ENCODE measurements at regions of chr16 and their contacts with region 1.

Region 1: GRCh38 chr16:67841764-67842508 is at the start of gene THAP11:
- DNase-seq: peak; percentile 96
- ATAC-seq: peak; percentile 68
- H3K4me3 Mint-ChIP-seq: peak within 1 kb of the TSS; percentile 97
- H3K27ac Mint-ChIP-seq: peak within 1 kb of the TSS; percentile 96
- H3K4me1 Mint-ChIP-seq: peaks cover 28% of the 10 kb centered on the region
- H3K27me3 Mint-ChIP-seq: no peaks in the 10 kb centered on the region
- CTCF ChIP-seq: peak; percentile 84
- total RNA-seq, gene THAP11: 40.6 to 40.7 TPM

Region 2: DNA sequence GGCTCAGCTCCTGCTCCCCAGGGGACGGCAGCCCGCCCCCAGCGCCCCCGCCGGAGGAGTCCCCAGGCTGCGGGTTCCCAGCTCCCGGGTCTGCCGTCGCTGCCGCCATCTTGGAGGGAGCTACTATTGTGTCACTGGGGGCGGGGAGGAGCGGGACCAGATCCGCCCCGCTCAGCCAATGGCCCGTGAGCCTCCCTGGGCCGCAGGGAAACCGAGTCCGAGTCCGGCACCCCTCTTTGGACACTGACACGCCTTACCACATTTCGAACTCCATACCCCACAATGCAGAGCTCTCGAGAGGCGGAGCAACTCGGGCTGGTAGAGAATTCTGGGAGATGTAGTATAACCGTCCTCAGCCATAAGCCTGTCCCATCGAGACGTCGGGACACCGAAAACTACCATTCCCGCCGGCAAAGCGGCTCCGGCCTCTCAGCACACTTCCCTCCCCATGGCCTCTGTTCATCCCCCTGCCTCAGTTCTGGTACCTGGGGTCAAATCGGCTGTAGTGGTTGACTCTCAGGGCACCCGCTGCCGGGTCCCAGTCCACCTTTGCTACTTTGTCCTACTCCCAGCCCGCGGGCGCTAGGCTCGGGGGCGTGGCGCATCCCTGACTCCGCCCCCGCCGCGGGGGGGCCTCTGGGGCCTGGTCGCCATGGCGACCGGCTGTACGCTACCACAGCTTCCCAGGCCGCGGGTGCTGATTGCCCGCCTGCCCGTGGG is 35.3 kb before region 1 on chr16 and contains the starts of genes RANBP10 and TSNAXIP1:
- CTCF ChIA-PET with region 1: interaction called, 5 read pairs
- POLR2A ChIA-PET with region 1: interaction called, 5 read pairs
- intact Hi-C with region 1: loop called (anchors 5 kb)
- DNase-seq: peak; percentile 98
- ATAC-seq: peak; percentile 96
- H3K4me3 Mint-ChIP-seq: peak within 1 kb of the TSS; percentile 94
- H3K27ac Mint-ChIP-seq: peak within 1 kb of the TSS; percentile 97
- H3K4me1 Mint-ChIP-seq: peaks cover 38% of the 10 kb centered on the region
- H3K27me3 Mint-ChIP-seq: no peaks in the 10 kb centered on the region
- CTCF ChIP-seq: no peak
- total RNA-seq, gene RANBP10: 15.9 to 18.9 TPM
- total RNA-seq, gene TSNAXIP1: 0.40 to 0.47 TPM

Region 3: GRCh38 chr16:67865316-67865715 is 23.4 kb after region 1 on chr16:
- CTCF ChIA-PET with region 1: no interaction called
- POLR2A ChIA-PET with region 1: interaction called, 11 read pairs
- intact Hi-C with region 1: no loop called
- DNase-seq: peak; percentile 30
- ATAC-seq: peak; percentile 64
- H3K4me3 Mint-ChIP-seq: no peak overlapping the region
- H3K27ac Mint-ChIP-seq: no peak overlapping the region
- H3K4me1 Mint-ChIP-seq: no peaks in the 10 kb centered on the region
- H3K27me3 Mint-ChIP-seq: no peaks in the 10 kb centered on the region
- CTCF ChIP-seq: peak; percentile 33

Region 4: GRCh38 chr16:67872786-67873537 is 31.0 kb after region 1 on chr16 and contains the start of gene EDC4:
- CTCF ChIA-PET with region 1: no interaction called
- POLR2A ChIA-PET with region 1: interaction called, 12 read pairs
- intact Hi-C with region 1: no loop called
- DNase-seq: peak; percentile 89
- ATAC-seq: peak; percentile 90
- H3K4me3 Mint-ChIP-seq: peak within 1 kb of the TSS; percentile 82
- H3K27ac Mint-ChIP-seq: peak within 1 kb of the TSS; percentile 93
- H3K4me1 Mint-ChIP-seq: peaks cover 27% of the 10 kb centered on the region
- H3K27me3 Mint-ChIP-seq: no peaks in the 10 kb centered on the region
- CTCF ChIP-seq: no peak
- total RNA-seq, gene EDC4: 78.7 to 90.9 TPM